Activated CD4-positive, alpha-beta T cell treated with anti-CD3 and anti-CD28 coated beads, Interleukin-2, amount 10 ng/mL, durations not matched to agents 24 days and 14 days (primary cell): ENCODE measurements at regions of chr12 and their contacts with region 1.

Region 1: GRCh38 chr12:29380536-29381523 is at the start of gene ERGIC2:
- DNase-seq: peak; percentile 97
- H3K4me3 Mint-ChIP-seq: peak within 1 kb of the TSS; percentile 96
- H3K27ac Mint-ChIP-seq: peak within 1 kb of the TSS; percentile 98
- H3K4me1 Mint-ChIP-seq: peaks cover 38% of the 10 kb centered on the region
- H3K27me3 Mint-ChIP-seq: no peaks in the 10 kb centered on the region
- total RNA-seq, gene ERGIC2: 95.6 and 101 TPM in 2 replicates

Region 2: GRCh38 chr12:28622406-28622805 is 758.4 kb before region 1 on chr12:
- intact Hi-C with region 1: no loop called
- DNase-seq: no peak
- H3K4me3 Mint-ChIP-seq: no peak overlapping the region
- H3K27ac Mint-ChIP-seq: no peak overlapping the region
- H3K4me1 Mint-ChIP-seq: no peaks in the 10 kb centered on the region
- H3K27me3 Mint-ChIP-seq: peaks cover 4% of the 10 kb centered on the region

Region 3: GRCh38 chr12:29148911-29149690 is 231.7 kb before region 1 on chr12 and contains the start of gene FAR2:
- intact Hi-C with region 1: loop called (anchors 2 kb)
- DNase-seq: peak; percentile 85
- H3K4me3 Mint-ChIP-seq: peak within 1 kb of the TSS; percentile 95
- H3K27ac Mint-ChIP-seq: peak within 1 kb of the TSS; percentile 93
- H3K4me1 Mint-ChIP-seq: peaks cover 17% of the 10 kb centered on the region
- H3K27me3 Mint-ChIP-seq: peaks cover 56% of the 10 kb centered on the region
- total RNA-seq, gene FAR2: 4.4 and 5.2 TPM in 2 replicates

Region 4: DNA sequence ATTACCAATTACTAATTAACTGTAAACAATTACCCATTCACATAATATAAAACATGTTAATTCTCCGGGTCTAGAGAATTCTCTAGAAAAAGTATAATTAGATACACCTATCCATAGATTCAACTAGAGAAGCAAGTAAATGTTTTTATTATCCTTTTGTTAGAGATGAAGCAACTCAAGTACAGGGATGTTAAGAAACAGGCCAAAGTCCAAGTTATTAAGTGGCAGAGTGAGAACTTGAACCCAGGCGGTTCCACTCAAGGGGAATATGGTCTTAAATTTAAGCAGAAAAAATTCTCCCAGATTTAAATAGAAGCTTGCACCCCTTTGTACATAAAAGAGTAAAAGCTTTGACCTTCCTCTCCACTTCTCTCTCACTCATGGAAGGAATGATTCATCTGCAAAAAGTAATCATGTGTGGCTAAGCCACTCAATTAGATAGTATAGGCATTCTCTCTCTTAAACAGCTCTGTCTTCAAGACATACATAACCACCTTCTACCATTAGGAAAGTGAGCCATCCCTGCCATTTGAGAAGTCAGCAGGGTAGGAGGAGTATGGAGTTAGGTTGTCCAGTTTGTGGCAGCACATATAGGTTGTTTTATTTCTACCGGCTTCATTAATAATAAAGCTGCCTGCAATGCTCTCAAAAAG is 33.9 kb before region 1 on chr12:
- intact Hi-C with region 1: loop called (anchors 5 kb)
- DNase-seq: no peak
- H3K4me3 Mint-ChIP-seq: no peak overlapping the region
- H3K27ac Mint-ChIP-seq: peak overlapping the region; percentile 12
- H3K4me1 Mint-ChIP-seq: peaks cover 7% of the 10 kb centered on the region
- H3K27me3 Mint-ChIP-seq: no peaks in the 10 kb centered on the region

Region 5: DNA sequence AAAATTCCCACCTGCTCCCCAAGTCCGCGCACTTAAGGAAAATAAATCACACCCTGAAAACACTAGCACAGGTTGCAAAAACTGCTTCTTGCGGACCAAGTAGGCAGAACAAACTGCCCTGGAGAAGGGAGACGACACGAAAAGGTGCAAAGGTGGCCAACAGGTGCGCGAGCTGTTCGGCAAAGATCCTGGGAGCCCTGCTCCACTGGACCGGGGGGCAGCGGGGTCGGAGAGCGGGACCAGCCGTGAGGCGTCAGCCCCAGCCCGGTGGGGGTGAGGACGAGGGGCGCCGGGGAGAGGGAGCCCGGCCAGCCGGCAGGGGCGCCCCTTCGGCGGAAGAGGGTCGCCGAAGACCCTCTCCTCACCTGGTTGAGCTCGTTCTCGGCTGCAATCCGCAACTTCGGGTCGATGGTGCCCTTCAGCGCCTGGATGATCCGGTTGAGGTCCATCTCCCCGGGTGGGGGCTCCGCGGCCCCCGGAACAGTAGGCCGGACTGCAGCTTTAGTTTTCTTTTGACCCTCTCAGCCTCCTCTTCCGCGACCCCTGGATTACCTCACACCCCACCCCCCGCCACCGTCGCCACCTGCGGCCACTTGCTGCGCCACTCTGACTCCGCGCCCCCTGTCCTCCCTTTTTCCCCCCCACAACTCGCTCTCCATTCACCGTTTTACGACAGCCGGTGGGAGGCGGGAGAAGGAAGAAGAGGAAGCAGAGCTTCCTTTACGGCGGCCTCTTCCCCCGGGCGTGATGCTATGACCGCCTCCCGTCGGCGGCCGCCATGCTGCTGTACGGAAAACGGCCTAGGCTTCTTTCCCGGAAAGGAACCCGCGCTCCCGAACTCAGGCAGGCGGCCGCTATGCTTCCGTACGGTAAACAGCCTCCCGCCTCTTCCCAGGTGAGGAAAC is 1314.6 kb after region 1 on chr12 and contains the start of gene IPO8:
- intact Hi-C with region 1: loop called (anchors 5 kb)
- DNase-seq: peak; percentile 95
- H3K4me3 Mint-ChIP-seq: peak within 1 kb of the TSS; percentile 93
- H3K27ac Mint-ChIP-seq: peak within 1 kb of the TSS; percentile 91
- H3K4me1 Mint-ChIP-seq: peaks cover 33% of the 10 kb centered on the region
- H3K27me3 Mint-ChIP-seq: peaks cover 7% of the 10 kb centered on the region
- total RNA-seq, gene IPO8: 41.3 and 45.9 TPM in 2 replicates

Region 6: GRCh38 chr12:30754709-30755394 is 1374.0 kb after region 1 on chr12 and contains the start of gene CAPRIN2:
- intact Hi-C with region 1: loop called (anchors 2 kb)
- DNase-seq: peak; percentile 98
- H3K4me3 Mint-ChIP-seq: peak within 1 kb of the TSS; percentile 91
- H3K27ac Mint-ChIP-seq: peak within 1 kb of the TSS; percentile 75
- H3K4me1 Mint-ChIP-seq: peaks cover 22% of the 10 kb centered on the region
- H3K27me3 Mint-ChIP-seq: peaks cover 8% of the 10 kb centered on the region
- total RNA-seq, gene CAPRIN2: 8.6 and 12.2 TPM in 2 replicates